ENCODE measurements at regions of chr13 and their contacts with region 1.

Region 1: DNA sequence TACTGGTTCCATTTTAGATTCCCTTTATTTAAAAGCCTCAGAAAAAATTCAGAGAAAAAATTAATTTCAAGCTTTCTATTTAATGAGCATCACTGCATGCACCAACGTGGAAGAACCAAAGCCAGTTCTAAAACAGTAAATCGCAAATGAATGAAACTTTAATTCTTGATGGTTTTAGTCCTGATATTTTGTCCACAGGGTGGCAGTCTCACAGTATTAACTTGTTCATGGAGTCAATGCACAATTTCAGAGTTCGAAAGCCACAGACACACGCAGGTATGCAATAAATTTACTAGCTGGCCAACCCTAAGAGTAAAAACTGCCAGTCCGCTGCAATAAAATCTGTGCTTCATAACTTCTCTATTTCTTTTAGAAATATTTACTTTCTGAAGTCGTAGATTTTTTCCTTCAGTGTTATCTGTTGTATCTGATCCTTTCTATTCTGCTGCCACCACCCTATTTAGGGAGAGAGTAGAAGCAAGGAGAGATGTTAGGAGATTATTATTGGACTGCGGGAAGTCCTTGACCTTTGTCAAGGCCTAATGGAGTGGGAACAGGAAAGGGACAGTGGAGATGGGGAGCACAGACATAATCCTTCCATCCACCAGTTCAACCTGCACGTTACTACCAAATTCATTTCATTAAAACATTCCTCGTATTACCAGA is 7.0 kb upstream of the WBP4 start:
- DNase-seq: peak in 3 of 5 donors; percentile 15 to 79 (median 65)
- H3K4me3 ChIP-seq: no peak overlapping the region
- H3K27ac ChIP-seq: no peak overlapping the region
- H3K4me1 ChIP-seq: peaks cover 0 to 25% (median 9%) of the 10 kb centered on the region in 3 donors
- H3K27me3 ChIP-seq: no peaks in the 10 kb centered on the region
- CTCF ChIP-seq: peak; percentile 46

Region 2: GRCh38 chr13:40922437-40923040 is 131.8 kb before region 1 on chr13:
- intact Hi-C with region 1: loop called (anchors 10 kb)
- DNase-seq: peak in 2 of 5 donors; percentile 7 to 59
- H3K4me3 ChIP-seq: no peak overlapping the region
- H3K27ac ChIP-seq: no peak overlapping the region
- H3K4me1 ChIP-seq: peaks cover 0 to 2% (median 0%) of the 10 kb centered on the region in 3 donors
- H3K27me3 ChIP-seq: no peaks in the 10 kb centered on the region
- CTCF ChIP-seq: no peak

Region 3: GRCh38 chr13:41398494-41399170 is 344.3 kb after region 1 on chr13:
- intact Hi-C with region 1: no loop called
- DNase-seq: peak in 3 of 5 donors; percentile 13 to 37 (median 20)
- H3K4me3 ChIP-seq: no peak overlapping the region
- H3K27ac ChIP-seq: no peak overlapping the region
- H3K4me1 ChIP-seq: no peaks in the 10 kb centered on the region
- H3K27me3 ChIP-seq: no peaks in the 10 kb centered on the region
- CTCF ChIP-seq: no peak